Adrenal gland (tissue), 19 donors: ENCODE measurements at regions of chr4 and their contacts with region 1.

Region 1: DNA sequence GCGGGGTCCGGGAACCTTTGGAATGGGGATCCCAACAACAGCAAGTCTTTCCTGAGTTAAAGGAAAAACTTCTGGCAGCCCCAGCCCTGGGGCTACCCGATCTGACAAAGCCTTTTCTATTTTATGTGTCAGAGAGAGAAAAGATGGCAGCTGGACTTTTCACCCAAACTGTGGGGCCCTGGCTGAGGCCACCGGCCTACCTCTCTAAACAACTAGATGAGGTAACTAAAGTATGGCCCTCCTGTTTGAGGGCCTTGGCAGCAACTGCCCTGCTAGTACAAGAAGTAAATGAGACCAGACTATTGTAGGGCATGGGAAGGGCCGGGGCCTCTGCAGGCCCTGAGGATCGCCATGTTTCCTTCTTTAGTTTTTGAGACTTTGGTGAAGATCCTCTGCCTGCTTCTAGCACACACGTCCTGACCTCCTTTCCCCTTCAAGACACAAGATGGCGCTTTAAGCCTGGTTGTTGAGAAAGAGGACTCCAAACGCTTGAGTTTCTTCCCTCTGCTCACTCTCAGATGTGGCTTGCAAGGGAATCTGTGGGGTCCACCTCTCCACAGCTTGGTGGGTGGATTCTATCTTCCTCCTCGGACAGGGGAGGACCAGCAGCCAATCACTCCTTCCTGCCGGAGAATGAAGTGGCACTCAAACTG is 18.5 kb upstream of the DRD5 start:
- DNase-seq: peak; percentile 65 to 84 (median 74)
- H3K4me3 ChIP-seq: no peak overlapping the region
- H3K27ac ChIP-seq: no peak overlapping the region
- H3K4me1 ChIP-seq: no peaks in the 10 kb centered on the region
- H3K27me3 ChIP-seq: no peaks in the 10 kb centered on the region
- CTCF ChIP-seq: peak; percentile 44 to 86 (median 76)
- POLR2A ChIP-seq: no peak

Region 2: GRCh38 chr4:9898596-9899305 is 135.8 kb after region 1 on chr4:
- intact Hi-C with region 1: loop called (anchors 5 kb)
- DNase-seq: peak; percentile 58 to 84 (median 72)
- H3K4me3 ChIP-seq: no peak overlapping the region
- H3K27ac ChIP-seq: no peak overlapping the region
- H3K4me1 ChIP-seq: no peaks in the 10 kb centered on the region
- H3K27me3 ChIP-seq: no peaks in the 10 kb centered on the region
- CTCF ChIP-seq: peak in 5 of 6 experiments; percentile 29 to 54 (median 47)
- POLR2A ChIP-seq: no peak

Region 3: GRCh38 chr4:9904976-9905587 is 142.1 kb after region 1 on chr4:
- intact Hi-C with region 1: loop called in 1 of 2 experiments (anchors 5 kb)
- DNase-seq: peak in 6 of 7 donors; percentile 36 to 68 (median 58)
- H3K4me3 ChIP-seq: no peak overlapping the region
- H3K27ac ChIP-seq: no peak overlapping the region
- H3K4me1 ChIP-seq: peaks cover 0 to 6% of the 10 kb centered on the region in 2 donors
- H3K27me3 ChIP-seq: no peaks in the 10 kb centered on the region
- CTCF ChIP-seq: no peak
- POLR2A ChIP-seq: no peak

Region 4: GRCh38 chr4:10006231-10006600 is 243.3 kb after region 1 on chr4:
- intact Hi-C with region 1: loop called in 1 of 2 experiments (anchors 2 kb)
- DNase-seq: peak in 5 of 7 donors; percentile 29 to 40 (median 35)
- H3K4me3 ChIP-seq: no peak overlapping the region
- H3K27ac ChIP-seq: peak overlapping the region in 2 of 5 donors; percentile 70 to 78
- H3K4me1 ChIP-seq: peaks cover 0 to 29% of the 10 kb centered on the region in 2 donors
- H3K27me3 ChIP-seq: no peaks in the 10 kb centered on the region
- CTCF ChIP-seq: no peak
- POLR2A ChIP-seq: no peak

Region 5: DNA sequence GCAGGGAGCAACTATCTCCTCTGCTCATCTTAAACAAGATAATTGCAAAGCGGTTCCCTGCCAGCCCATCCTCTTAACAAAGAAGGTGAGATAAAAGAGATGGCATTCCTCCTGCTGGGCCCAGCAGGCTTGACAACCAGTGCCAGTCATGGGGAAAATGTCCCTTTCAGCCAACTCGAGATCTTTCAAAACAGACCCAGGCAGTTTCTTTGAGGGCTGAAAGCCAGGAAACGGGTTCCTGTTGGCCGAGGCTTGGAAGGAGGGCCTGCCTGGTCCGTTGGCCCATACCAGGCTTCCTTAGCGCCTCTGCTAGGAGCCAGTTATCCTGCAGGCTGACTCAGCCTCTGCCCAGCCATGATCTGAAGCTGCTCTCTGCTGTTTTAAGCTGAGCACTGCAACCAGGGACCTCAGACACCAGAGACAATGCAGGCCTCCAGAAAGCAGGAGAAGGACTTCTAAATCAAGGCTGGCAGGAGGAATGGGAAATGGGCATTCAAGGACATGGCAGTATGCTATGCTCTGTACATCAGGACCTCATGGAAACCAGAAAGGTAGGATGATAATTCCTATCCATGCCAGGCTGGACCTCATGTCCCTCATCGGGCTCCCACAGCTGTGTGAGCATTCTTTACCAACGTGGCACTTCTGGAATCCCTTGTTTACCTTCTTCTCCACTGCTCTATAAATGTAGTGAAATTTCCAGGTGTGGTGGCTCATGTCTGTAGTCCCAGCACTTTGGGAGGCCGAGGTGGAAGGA is 300.8 kb after region 1 on chr4:
- intact Hi-C with region 1: loop called in 1 of 2 experiments (anchors 5 kb)
- DNase-seq: peak; percentile 77 to 93 (median 88)
- H3K4me3 ChIP-seq: no peak overlapping the region
- H3K27ac ChIP-seq: peak overlapping the region in 2 of 5 donors; percentile 53 to 67
- H3K4me1 ChIP-seq: peaks cover 0 to 14% of the 10 kb centered on the region in 2 donors
- H3K27me3 ChIP-seq: no peaks in the 10 kb centered on the region
- CTCF ChIP-seq: peak; percentile 52 to 98 (median 93)
- POLR2A ChIP-seq: no peak